Ascending aorta (tissue), 2 donors: ENCODE measurements at regions of chr10 and their contacts with region 1.

Region 1: GRCh38 chr10:22228943-22229801 is 11.4 kb upstream of the EBLN1 start:
- DNase-seq: peak; percentile 41 to 92
- H3K4me3 ChIP-seq: peak overlapping the region; percentile 63 to 70
- H3K27ac ChIP-seq: peak overlapping the region; percentile 80 to 85
- H3K4me1 ChIP-seq: peaks cover 0 to 3% of the 10 kb centered on the region in 2 donors
- H3K27me3 ChIP-seq: no peaks in the 10 kb centered on the region
- CTCF ChIP-seq: no peak

Region 2: GRCh38 chr10:21533467-21534279 is 695.5 kb before region 1 on chr10 and contains the start of gene MLLT10:
- intact Hi-C with region 1: loop called (anchors 10 kb)
- DNase-seq: peak; percentile 82 to 96
- H3K4me3 ChIP-seq: peak within 1 kb of the TSS; percentile 81 to 93
- H3K27ac ChIP-seq: peak within 1 kb of the TSS; percentile 89 to 94
- H3K4me1 ChIP-seq: peaks cover 0 to 10% of the 10 kb centered on the region in 2 donors
- H3K27me3 ChIP-seq: no peaks in the 10 kb centered on the region
- CTCF ChIP-seq: peak; percentile 37 to 48 (median 42)
- total RNA-seq, gene MLLT10: 16.3 TPM

Region 3: GRCh38 chr10:22022257-22023032 is 206.7 kb before region 1 on chr10:
- intact Hi-C with region 1: no loop called
- DNase-seq: no peak
- H3K4me3 ChIP-seq: no peak overlapping the region
- H3K27ac ChIP-seq: no peak overlapping the region
- H3K4me1 ChIP-seq: no peaks in the 10 kb centered on the region
- H3K27me3 ChIP-seq: no peaks in the 10 kb centered on the region
- CTCF ChIP-seq: no peak

Region 4: DNA sequence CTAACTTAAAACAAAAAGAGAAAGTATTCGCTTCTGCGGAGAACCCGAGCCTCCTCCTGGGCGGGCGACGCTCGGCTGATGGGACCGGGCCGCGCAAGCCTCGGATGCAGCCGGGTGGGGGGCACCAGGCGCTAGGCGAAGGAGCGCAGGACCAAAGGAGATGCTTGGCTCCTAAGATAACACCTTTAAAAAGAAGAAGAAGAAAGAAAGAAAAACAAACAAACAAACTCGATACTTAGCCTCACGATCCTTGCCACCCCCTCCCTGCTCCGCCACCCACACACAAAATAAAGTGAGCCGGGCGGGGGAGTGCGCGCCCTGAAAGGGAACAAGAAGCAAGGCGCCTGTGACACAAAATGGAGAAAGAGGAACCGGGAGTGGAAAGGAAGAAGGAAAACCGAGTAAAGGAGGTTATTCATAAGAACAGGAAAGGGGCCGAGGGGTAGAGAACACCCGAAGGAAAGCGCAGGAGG is 22.6 kb after region 1 on chr10:
- intact Hi-C with region 1: loop called (anchors 1 kb)
- DNase-seq: peak in 1 of 2 donors; percentile 81
- H3K4me3 ChIP-seq: peak overlapping the region; percentile 81 to 93
- H3K27ac ChIP-seq: peak overlapping the region; percentile 98
- H3K4me1 ChIP-seq: no peaks in the 10 kb centered on the region
- H3K27me3 ChIP-seq: no peaks in the 10 kb centered on the region
- CTCF ChIP-seq: no peak

Region 5: GRCh38 chr10:23067939-23068775 is 839.0 kb after region 1 on chr10:
- intact Hi-C with region 1: loop called (anchors 10 kb)
- DNase-seq: peak in 1 of 2 donors; percentile 93
- H3K4me3 ChIP-seq: no peak overlapping the region
- H3K27ac ChIP-seq: peak overlapping the region; percentile 28 to 33
- H3K4me1 ChIP-seq: peaks cover 5 to 12% of the 10 kb centered on the region in 2 donors
- H3K27me3 ChIP-seq: no peaks in the 10 kb centered on the region
- CTCF ChIP-seq: peak; percentile 44 to 87 (median 86)